ENCODE measurements at regions of chr12 and their contacts with region 1.

Region 1: GRCh38 chr12:1650260-1650977 is 21.4 kb downstream of the WNT5B start:
- DNase-seq: no peak
- ATAC-seq: no peak
- H3K4me3 ChIP-seq: no peak overlapping the region
- H3K4me3 Mint-ChIP-seq: no peak overlapping the region
- H3K27ac ChIP-seq: no peak overlapping the region
- H3K27ac Mint-ChIP-seq: no peak overlapping the region
- H3K4me1 ChIP-seq: peaks cover 7% of the 10 kb centered on the region
- H3K4me1 Mint-ChIP-seq: no peaks in the 10 kb centered on the region
- H3K27me3 ChIP-seq: no peaks in the 10 kb centered on the region
- H3K27me3 Mint-ChIP-seq: peaks cover 4% of the 10 kb centered on the region
- CTCF ChIP-seq: no peak

Region 2: DNA sequence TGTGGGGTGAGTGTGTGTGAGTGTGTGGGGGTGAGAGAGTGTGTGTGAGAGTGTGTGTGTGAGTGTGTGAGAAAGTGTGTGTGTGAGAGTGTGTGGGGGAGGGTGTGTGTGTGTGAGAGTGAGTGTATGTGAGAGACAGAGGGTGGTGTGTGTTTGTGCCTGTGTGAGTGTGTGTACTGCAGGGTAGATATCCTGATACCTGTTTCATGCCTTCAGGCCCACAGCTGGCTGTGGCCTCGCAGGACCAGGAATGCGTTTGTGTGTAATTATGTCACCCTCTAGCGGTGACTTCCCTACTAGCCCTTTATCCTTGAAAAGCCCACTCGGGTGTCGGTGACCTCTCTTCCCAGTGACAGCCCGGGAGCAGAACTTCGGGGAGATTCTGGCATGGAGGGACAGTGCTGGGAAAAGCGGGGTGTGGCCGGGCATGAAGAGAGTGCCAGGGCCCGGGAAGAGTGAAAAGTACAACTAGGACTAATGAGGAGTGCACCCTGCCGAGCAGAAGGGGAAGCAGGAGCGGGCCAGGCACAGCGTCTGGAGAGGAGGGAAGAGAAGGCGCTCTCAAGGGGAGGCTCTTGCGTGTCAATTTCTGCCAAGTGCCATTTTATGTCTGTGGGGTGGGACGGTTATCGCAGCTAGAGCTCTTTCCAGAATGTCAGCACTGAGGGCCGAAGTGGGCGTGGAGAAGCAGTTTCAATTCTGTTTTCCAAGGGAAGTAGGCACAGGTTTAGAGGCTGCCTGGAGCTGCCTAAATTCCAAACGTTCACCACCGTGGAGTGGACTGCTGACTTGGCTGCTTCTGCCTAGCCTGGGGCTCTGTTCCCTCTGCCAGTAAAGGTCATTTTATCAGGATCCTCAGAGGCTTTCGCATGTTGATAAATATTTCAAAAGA is 45.0 kb before region 1 on chr12:
- CTCF ChIA-PET with region 1: no interaction called
- POLR2A ChIA-PET with region 1: no interaction called
- intact Hi-C with region 1: no loop called
- DNase-seq: peak; percentile 37 to 87 (median 50)
- ATAC-seq: peak; percentile 69
- H3K4me3 ChIP-seq: peak overlapping the region; percentile 51
- H3K4me3 Mint-ChIP-seq: peak overlapping the region; percentile 79
- H3K27ac ChIP-seq: no peak overlapping the region
- H3K27ac Mint-ChIP-seq: peak overlapping the region; percentile 10
- H3K4me1 ChIP-seq: peaks cover 26% of the 10 kb centered on the region
- H3K4me1 Mint-ChIP-seq: peaks cover 39% of the 10 kb centered on the region
- H3K27me3 ChIP-seq: no peaks in the 10 kb centered on the region
- H3K27me3 Mint-ChIP-seq: no peaks in the 10 kb centered on the region
- CTCF ChIP-seq: peak; percentile 77

Region 3: DNA sequence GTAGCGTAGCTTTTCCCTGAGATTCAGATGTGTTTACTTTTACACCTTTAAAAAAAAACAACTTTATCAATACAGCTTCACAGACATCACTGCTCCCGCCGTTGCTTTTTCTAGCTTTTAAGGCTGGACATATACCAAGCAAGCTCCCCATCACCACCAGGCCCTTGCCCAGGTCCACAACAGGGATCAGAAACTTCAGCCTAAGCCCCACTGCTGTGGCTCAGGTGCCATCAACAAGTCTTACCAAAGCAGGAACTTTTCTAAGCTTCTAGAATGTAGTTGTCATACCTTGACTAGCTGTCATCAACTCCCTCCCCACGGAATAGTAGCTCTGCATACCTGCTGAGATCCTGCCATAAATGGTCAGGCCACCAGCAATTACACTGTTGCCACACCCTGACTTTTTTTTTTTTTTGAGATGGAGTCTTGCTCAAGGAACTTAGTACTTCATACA is 20.4 kb after region 1 on chr12:
- CTCF ChIA-PET with region 1: interaction called, 14 read pairs
- POLR2A ChIA-PET with region 1: no interaction called
- intact Hi-C with region 1: no loop called
- DNase-seq: no peak
- ATAC-seq: no peak
- H3K4me3 ChIP-seq: no peak overlapping the region
- H3K4me3 Mint-ChIP-seq: no peak overlapping the region
- H3K27ac ChIP-seq: no peak overlapping the region
- H3K27ac Mint-ChIP-seq: no peak overlapping the region
- H3K4me1 ChIP-seq: peaks cover 31% of the 10 kb centered on the region
- H3K4me1 Mint-ChIP-seq: peaks cover 32% of the 10 kb centered on the region
- H3K27me3 ChIP-seq: no peaks in the 10 kb centered on the region
- H3K27me3 Mint-ChIP-seq: no peaks in the 10 kb centered on the region
- CTCF ChIP-seq: no peak

Region 4: DNA sequence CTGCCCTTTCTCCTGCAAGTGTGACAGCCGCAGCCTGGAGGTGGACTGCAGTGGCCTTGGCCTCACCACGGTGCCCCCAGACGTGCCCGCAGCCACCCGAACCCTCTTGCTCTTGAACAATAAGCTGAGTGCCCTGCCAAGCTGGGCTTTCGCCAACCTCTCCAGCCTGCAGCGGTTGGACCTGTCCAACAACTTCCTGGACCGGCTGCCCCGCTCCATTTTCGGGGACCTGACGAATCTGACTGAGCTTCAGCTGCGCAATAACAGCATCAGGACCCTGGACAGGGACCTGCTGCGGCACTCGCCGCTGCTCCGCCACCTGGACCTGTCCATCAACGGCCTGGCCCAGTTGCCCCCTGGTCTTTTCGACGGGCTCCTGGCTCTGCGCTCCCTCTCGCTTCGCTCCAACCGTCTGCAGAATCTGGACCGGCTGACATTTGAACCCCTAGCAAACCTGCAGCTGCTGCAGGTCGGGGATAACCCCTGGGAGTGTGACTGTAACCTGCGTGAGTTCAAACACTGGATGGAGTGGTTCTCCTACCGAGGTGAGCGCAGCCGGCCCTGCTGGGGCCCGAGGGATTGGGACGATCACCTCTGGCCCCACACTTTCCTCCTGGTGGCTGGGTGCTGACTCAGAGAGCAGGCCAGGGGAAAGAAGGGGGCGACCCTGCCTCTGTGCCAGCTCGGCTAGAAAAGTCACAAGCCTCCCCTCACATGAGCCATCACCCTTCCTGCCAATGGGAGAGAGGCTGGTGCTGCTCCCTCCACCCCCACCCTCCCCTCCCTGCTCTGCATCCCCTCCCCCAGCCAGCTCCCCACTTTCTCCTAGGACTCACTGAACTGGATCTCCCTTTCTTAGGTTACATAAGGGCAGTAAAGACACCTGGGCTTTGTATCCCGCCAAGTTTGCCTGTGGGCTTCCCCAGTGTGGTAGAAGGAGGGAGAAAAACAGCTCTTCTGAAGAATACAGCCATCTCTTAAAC is 180.9 kb after region 1 on chr12:
- CTCF ChIA-PET with region 1: no interaction called
- POLR2A ChIA-PET with region 1: no interaction called
- intact Hi-C with region 1: no loop called
- DNase-seq: peak in 2 of 14 experiments; percentile 47 to 49
- ATAC-seq: no peak
- H3K4me3 ChIP-seq: no peak overlapping the region
- H3K4me3 Mint-ChIP-seq: no peak overlapping the region
- H3K27ac ChIP-seq: no peak overlapping the region
- H3K27ac Mint-ChIP-seq: no peak overlapping the region
- H3K4me1 ChIP-seq: no peaks in the 10 kb centered on the region
- H3K4me1 Mint-ChIP-seq: no peaks in the 10 kb centered on the region
- H3K27me3 ChIP-seq: peaks cover 13 to 14% of the 10 kb centered on the region in 2 experiments
- H3K27me3 Mint-ChIP-seq: peaks cover 40% of the 10 kb centered on the region
- CTCF ChIP-seq: no peak

Region 5: GRCh38 chr12:2034633-2035430 is 384.4 kb after region 1 on chr12:
- CTCF ChIA-PET with region 1: no interaction called
- POLR2A ChIA-PET with region 1: no interaction called
- intact Hi-C with region 1: loop called in 1 of 2 experiments (anchors 5 kb)
- DNase-seq: peak; percentile 71 to 94 (median 83)
- ATAC-seq: peak; percentile 99
- H3K4me3 ChIP-seq: peak overlapping the region; percentile 47
- H3K4me3 Mint-ChIP-seq: peak overlapping the region; percentile 73
- H3K27ac ChIP-seq: no peak overlapping the region
- H3K27ac Mint-ChIP-seq: no peak overlapping the region
- H3K4me1 ChIP-seq: peaks cover 11% of the 10 kb centered on the region
- H3K4me1 Mint-ChIP-seq: peaks cover 16% of the 10 kb centered on the region
- H3K27me3 ChIP-seq: peaks cover 3 to 26% of the 10 kb centered on the region in 2 experiments
- H3K27me3 Mint-ChIP-seq: peaks cover 31% of the 10 kb centered on the region
- CTCF ChIP-seq: peak; percentile 91

Region 6: GRCh38 chr12:2291182-2291832 is 640.9 kb after region 1 on chr12:
- CTCF ChIA-PET with region 1: no interaction called
- POLR2A ChIA-PET with region 1: no interaction called
- intact Hi-C with region 1: loop called in 1 of 2 experiments (anchors 10 kb)
- DNase-seq: peak in 7 of 14 experiments; percentile 7 to 59 (median 24)
- ATAC-seq: peak; percentile 39
- H3K4me3 ChIP-seq: no peak overlapping the region
- H3K4me3 Mint-ChIP-seq: no peak overlapping the region
- H3K27ac ChIP-seq: no peak overlapping the region
- H3K27ac Mint-ChIP-seq: no peak overlapping the region
- H3K4me1 ChIP-seq: peaks cover 6% of the 10 kb centered on the region
- H3K4me1 Mint-ChIP-seq: peaks cover 9% of the 10 kb centered on the region
- H3K27me3 ChIP-seq: no peaks in the 10 kb centered on the region
- H3K27me3 Mint-ChIP-seq: peaks cover 8% of the 10 kb centered on the region
- CTCF ChIP-seq: peak; percentile 78

Measured in CD4-positive, alpha-beta T cell (primary cell).